ENCODE measurements at regions of chr4 and their contacts with region 1.

Region 1: GRCh38 chr4:88803600-88804096 is 106.0 kb upstream of the NAP1L5 start:
- DNase-seq: peak in 3 of 4 donors; percentile 27 to 68 (median 55)
- ATAC-seq: peak; percentile 70
- H3K4me3 ChIP-seq: no peak overlapping the region
- H3K27ac ChIP-seq: peak overlapping the region in 2 of 4 donors; percentile 31 to 57
- H3K4me1 ChIP-seq: peaks cover 76% of the 10 kb centered on the region
- H3K27me3 ChIP-seq: no peaks in the 10 kb centered on the region
- CTCF ChIP-seq: peak in 1 of 7 experiments; percentile 3
- POLR2A ChIP-seq: no peak

Region 2: DNA sequence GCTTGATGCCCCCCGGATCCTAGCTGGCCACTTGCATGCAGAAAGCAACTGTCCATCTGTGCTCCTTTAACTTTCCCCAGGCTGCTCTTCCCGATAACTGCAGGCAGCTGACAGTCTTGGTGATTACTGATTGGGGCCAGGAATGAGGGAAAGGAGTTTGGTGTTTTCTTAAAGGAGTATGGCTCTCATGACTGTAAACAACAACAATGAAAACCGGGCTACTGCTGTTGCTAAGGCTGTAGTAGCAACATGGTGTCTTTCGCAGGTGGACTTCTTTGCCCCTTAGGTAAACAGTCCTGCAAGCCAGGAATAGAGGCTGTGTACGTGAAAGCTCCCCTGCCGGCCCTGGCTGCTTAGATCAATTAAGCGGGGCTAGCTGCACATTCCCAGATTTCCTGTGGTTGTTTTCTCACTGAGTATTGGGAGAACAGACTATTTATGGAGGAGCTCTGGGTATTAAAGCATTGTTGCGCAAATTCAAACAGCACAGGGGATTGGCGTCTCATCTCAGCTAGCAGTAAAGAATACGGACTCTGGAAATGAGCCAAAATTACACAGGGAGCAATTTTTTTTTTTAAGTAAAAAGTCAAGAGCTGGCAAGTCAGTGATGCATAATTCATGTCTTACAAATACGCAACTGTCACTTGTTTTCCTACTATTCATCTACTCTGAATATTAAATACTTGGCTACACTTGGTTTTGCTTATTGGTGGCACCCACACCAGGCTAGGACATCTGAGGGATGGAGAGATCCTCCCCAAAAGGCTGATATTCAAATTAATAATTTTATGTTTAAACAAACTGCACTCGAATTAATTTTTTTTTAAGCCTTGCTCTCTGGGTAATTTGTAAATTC is 44.4 kb before region 1 on chr4:
- intact Hi-C with region 1: loop called (anchors 10 kb)
- DNase-seq: no peak
- ATAC-seq: peak; percentile 45
- H3K4me3 ChIP-seq: no peak overlapping the region
- H3K27ac ChIP-seq: peak overlapping the region in 3 of 4 donors; percentile 19 to 55 (median 33)
- H3K4me1 ChIP-seq: peaks cover 42% of the 10 kb centered on the region
- H3K27me3 ChIP-seq: no peaks in the 10 kb centered on the region
- CTCF ChIP-seq: no peak
- POLR2A ChIP-seq: no peak

Measured in body of pancreas (tissue), 4 donors.